ENCODE measurements at regions of chr21 and their contacts with region 1.

Region 1: GRCh38 chr21:42414928-42415769 is 11.4 kb downstream of the UBASH3A start:
- DNase-seq: peak; percentile 99
- H3K4me3 Mint-ChIP-seq: peak overlapping the region; percentile 64
- H3K27ac Mint-ChIP-seq: peak overlapping the region; percentile 94
- H3K4me1 Mint-ChIP-seq: peaks cover 64% of the 10 kb centered on the region
- H3K27me3 Mint-ChIP-seq: no peaks in the 10 kb centered on the region

Region 2: GRCh38 chr21:42392721-42393442 is 22.3 kb before region 1 on chr21:
- CTCF ChIA-PET with region 1: interaction called, 3 read pairs
- intact Hi-C with region 1: loop called (anchors 1 kb)
- DNase-seq: peak; percentile 62
- H3K4me3 Mint-ChIP-seq: peak overlapping the region; percentile 13
- H3K27ac Mint-ChIP-seq: peak overlapping the region; percentile 58
- H3K4me1 Mint-ChIP-seq: peaks cover 44% of the 10 kb centered on the region
- H3K27me3 Mint-ChIP-seq: no peaks in the 10 kb centered on the region

Region 3: GRCh38 chr21:42467140-42467983 is 52.2 kb after region 1 on chr21:
- CTCF ChIA-PET with region 1: interaction called, 3 read pairs
- intact Hi-C with region 1: loop called (anchors 5 kb)
- DNase-seq: peak; percentile 35
- H3K4me3 Mint-ChIP-seq: no peak overlapping the region
- H3K27ac Mint-ChIP-seq: no peak overlapping the region
- H3K4me1 Mint-ChIP-seq: peaks cover 30% of the 10 kb centered on the region
- H3K27me3 Mint-ChIP-seq: no peaks in the 10 kb centered on the region